ENCODE measurements at regions of chrX and their contacts with region 1.

Region 1: DNA sequence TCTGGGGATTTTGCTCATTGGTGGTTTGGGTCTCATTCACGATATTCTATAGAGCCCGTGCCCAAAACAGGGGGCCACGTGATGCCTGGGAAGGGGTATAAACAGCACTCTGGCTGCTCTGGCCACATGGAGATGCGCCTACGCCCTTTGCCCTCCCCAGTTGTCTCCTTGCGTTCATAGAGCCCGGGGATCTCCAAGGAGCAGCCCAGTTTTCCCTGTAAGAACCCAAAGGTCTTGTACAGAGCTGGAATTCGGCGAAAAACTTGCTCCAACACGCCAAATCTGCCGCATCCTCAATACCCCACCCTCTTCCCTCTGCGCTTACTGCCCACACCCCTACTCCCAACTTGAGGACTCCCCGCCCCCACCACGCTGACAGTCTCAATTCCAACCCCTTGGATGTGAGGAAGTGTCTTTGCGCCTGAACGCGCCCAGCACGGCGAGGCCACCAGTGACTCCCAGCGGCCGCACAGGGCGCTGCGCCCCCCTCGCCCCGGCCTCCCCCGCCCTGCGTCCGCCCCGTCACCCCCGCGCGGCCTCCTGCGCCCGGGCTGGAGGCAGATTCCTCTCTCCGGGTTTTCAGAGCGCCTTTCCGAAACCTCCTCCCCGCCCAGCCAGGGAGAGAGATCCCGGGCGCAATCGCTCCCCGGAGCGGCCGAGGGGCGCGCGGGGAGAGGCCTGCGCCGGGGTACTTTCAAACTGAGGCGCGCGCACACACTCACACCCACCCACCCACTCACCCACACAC is at the start of gene NHS:
- DNase-seq: peak; percentile 43
- ATAC-seq: no peak
- H3K4me3 Mint-ChIP-seq: peak within 1 kb of the TSS; percentile 43
- H3K27ac Mint-ChIP-seq: no peak within 1 kb of the TSS
- H3K4me1 Mint-ChIP-seq: peaks cover 13% of the 10 kb centered on the region
- H3K27me3 Mint-ChIP-seq: peaks cover 29% of the 10 kb centered on the region
- total RNA-seq, gene NHS: 6.7 to 10.2 TPM

Region 2: GRCh38 chrX:17242470-17242869 is 132.3 kb before region 1 on chrX:
- CTCF ChIA-PET with region 1: interaction called, 3 read pairs
- POLR2A ChIA-PET with region 1: no interaction called
- intact Hi-C with region 1: loop called in 1 of 2 experiments (anchors 10 kb)
- DNase-seq: peak; percentile 41
- ATAC-seq: peak; percentile 26
- H3K4me3 Mint-ChIP-seq: no peak overlapping the region
- H3K27ac Mint-ChIP-seq: no peak overlapping the region
- H3K4me1 Mint-ChIP-seq: no peaks in the 10 kb centered on the region
- H3K27me3 Mint-ChIP-seq: peaks cover 2% of the 10 kb centered on the region

Region 3: GRCh38 chrX:17413228-17413627 is 38.4 kb after region 1 on chrX:
- CTCF ChIA-PET with region 1: no interaction called
- POLR2A ChIA-PET with region 1: no interaction called
- intact Hi-C with region 1: loop called in 1 of 2 experiments (anchors 5 kb)
- DNase-seq: no peak
- ATAC-seq: no peak
- H3K4me3 Mint-ChIP-seq: no peak overlapping the region
- H3K27ac Mint-ChIP-seq: no peak overlapping the region
- H3K4me1 Mint-ChIP-seq: peaks cover 12% of the 10 kb centered on the region
- H3K27me3 Mint-ChIP-seq: peaks cover 6% of the 10 kb centered on the region

Region 4: DNA sequence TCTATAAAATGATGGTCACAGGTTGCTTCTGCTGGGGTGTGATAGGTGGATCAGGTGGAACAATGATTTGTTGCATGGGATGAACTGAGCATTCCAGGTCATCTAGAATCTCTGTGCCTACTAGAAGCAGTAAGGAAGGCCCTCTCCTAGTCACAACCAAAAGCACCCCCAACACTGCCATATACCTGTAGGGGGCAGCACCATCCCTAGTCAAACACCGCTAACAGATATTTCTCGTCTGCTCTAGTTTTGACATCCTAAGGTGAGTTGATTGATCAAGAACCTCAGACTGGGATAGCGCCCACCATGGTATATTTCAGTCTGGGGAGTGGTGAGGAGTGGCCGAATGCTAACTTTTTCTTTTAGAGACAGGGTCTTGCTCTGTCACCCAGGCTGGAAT is 160.4 kb after region 1 on chrX:
- CTCF ChIA-PET with region 1: interaction called, 3 read pairs
- POLR2A ChIA-PET with region 1: no interaction called
- intact Hi-C with region 1: loop called (anchors 5 to 10 kb)
- DNase-seq: peak; percentile 67
- ATAC-seq: peak; percentile 66
- H3K4me3 Mint-ChIP-seq: no peak overlapping the region
- H3K27ac Mint-ChIP-seq: no peak overlapping the region
- H3K4me1 Mint-ChIP-seq: peaks cover 15% of the 10 kb centered on the region
- H3K27me3 Mint-ChIP-seq: peaks cover 3% of the 10 kb centered on the region

Region 5: GRCh38 chrX:17697191-17697590 is 322.4 kb after region 1 on chrX:
- CTCF ChIA-PET with region 1: no interaction called
- POLR2A ChIA-PET with region 1: no interaction called
- intact Hi-C with region 1: no loop called
- DNase-seq: no peak
- ATAC-seq: peak; percentile 26
- H3K4me3 Mint-ChIP-seq: no peak overlapping the region
- H3K27ac Mint-ChIP-seq: no peak overlapping the region
- H3K4me1 Mint-ChIP-seq: no peaks in the 10 kb centered on the region
- H3K27me3 Mint-ChIP-seq: no peaks in the 10 kb centered on the region

Region 6: DNA sequence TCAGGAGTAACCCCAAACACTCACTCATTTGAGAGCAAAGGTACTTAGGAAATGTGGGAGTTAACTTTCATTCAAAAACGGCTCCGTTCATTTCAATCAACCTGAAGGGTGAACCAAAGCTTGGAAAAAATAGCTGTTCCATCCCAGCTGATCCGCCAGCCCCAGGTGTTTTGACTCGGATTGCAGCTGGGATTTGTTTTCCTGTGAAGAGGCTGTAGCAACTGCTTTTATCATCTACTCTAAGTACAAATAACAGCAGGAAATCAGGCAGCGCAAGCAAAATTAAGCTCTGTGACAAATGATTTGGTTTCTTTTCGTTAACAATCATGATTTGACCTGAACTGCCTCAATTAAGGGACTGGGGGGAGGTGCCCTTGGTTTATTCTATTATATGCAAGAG is 691.2 kb after region 1 on chrX:
- CTCF ChIA-PET with region 1: no interaction called
- POLR2A ChIA-PET with region 1: no interaction called
- intact Hi-C with region 1: no loop called
- DNase-seq: no peak
- ATAC-seq: no peak
- H3K4me3 Mint-ChIP-seq: no peak overlapping the region
- H3K27ac Mint-ChIP-seq: no peak overlapping the region
- H3K4me1 Mint-ChIP-seq: no peaks in the 10 kb centered on the region
- H3K27me3 Mint-ChIP-seq: no peaks in the 10 kb centered on the region

Measured in activated CD4-positive, alpha-beta T cell treated with anti-CD3 and anti-CD28 coated beads for 36 hours (primary cell).